A549 (cell line): ENCODE measurements at regions of chr2 and their contacts with region 1.

Region 1: DNA sequence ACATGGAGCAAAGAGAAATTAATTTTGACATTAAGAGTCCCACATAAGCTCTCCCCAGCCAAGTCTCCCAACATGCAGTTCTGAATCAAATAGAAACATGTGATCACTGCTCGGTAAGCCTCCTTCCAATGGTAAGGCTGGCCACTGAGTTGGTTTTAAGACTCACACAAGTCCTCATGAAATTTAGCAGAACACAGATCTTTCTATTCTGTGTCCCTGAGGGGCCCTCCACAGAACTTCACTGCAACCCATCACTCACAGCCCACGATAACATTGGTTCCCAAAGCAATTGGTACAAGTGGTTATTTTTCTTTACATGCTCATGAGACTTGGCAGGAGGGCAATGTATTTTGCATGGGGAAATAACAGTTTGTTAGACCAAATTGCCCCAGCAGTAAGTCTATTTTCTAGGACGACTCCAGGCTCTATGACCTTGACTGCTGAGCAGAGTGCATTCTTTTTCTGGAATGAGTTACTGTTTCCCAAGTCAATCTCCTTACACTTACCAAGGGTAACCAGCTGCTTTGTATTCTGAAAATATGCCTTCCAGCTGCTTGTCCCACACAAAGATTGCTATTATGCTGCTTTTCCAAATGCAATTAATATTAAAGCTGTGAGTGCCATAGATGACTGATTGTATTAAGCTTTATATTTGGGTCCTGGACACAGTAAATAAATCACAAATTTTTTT is 142.3 kb upstream of the TANK start:
- DNase-seq: no peak
- ATAC-seq: no peak
- H3K4me3 ChIP-seq: no peak overlapping the region
- H3K27ac ChIP-seq: no peak overlapping the region
- H3K4me1 ChIP-seq: no peaks in the 10 kb centered on the region
- CTCF ChIP-seq: no peak
- EP300 ChIP-seq: no peak
- POLR2A ChIP-seq: no peak
- RAD21 ChIP-seq: no peak

Region 2: GRCh38 chr2:161004379-161004778 is 13.5 kb before region 1 on chr2:
- CTCF ChIA-PET with region 1: interaction called, 12 read pairs
- POLR2A ChIA-PET with region 1: no interaction called
- DNase-seq: peak; percentile 5 to 24
- ATAC-seq: peak in 1 of 2 experiments; percentile 65; a peak in 3 of 6 replicates
- H3K4me3 ChIP-seq: no peak overlapping the region
- H3K27ac ChIP-seq: no peak overlapping the region
- H3K4me1 ChIP-seq: no peaks in the 10 kb centered on the region
- CTCF ChIP-seq: peak; percentile 47
- EP300 ChIP-seq: no peak
- POLR2A ChIP-seq: no peak
- RAD21 ChIP-seq: peak; percentile 54 to 59

Region 3: GRCh38 chr2:161104054-161104553 is 86.2 kb after region 1 on chr2:
- CTCF ChIA-PET with region 1: no interaction called
- POLR2A ChIA-PET with region 1: no interaction called
- DNase-seq: no peak
- ATAC-seq: no peak
- H3K4me3 ChIP-seq: no peak overlapping the region
- H3K27ac ChIP-seq: peak overlapping the region in 1 of 2 experiments; percentile 59; a peak in 1 of 6 replicates
- H3K4me1 ChIP-seq: peaks cover 25% of the 10 kb centered on the region
- CTCF ChIP-seq: no peak
- EP300 ChIP-seq: no peak
- POLR2A ChIP-seq: no peak
- RAD21 ChIP-seq: no peak